K562 (cell line): ENCODE measurements at regions of chr1 and their contacts with region 1.

Region 1: GRCh38 chr1:1615256-1616044 is at the start of gene MIB2:
- DNase-seq: peak; percentile 99 to 100 (median 99)
- ATAC-seq: peak; percentile 92
- H3K4me3 ChIP-seq: peak within 1 kb of the TSS; percentile 87
- H3K27ac ChIP-seq: peak within 1 kb of the TSS; percentile 99
- H3K4me1 ChIP-seq: peaks cover 14 to 70% of the 10 kb centered on the region in 2 experiments; a peak in 4 of 5 replicates
- H3K27me3 ChIP-seq: no peaks in the 10 kb centered on the region; a peak in 1 of 5 replicates
- CTCF ChIP-seq: 0 out of 6 replicates have a peak, but pooled peaks of 1 of the 3 experiments have one; percentile 3
- EP300 ChIP-seq: 0 out of 2 replicates have a peak, but pooled peaks have one; percentile 22
- POLR2A ChIP-seq: peak; percentile 98
- RAD21 ChIP-seq: peak in 1 of 2 experiments; percentile 20; a peak in 1 of 4 replicates
- polyA plus RNA-seq, gene MIB2: 0.04 TPM in 1 of 2 experiments, not detected in the other

Region 2: DNA sequence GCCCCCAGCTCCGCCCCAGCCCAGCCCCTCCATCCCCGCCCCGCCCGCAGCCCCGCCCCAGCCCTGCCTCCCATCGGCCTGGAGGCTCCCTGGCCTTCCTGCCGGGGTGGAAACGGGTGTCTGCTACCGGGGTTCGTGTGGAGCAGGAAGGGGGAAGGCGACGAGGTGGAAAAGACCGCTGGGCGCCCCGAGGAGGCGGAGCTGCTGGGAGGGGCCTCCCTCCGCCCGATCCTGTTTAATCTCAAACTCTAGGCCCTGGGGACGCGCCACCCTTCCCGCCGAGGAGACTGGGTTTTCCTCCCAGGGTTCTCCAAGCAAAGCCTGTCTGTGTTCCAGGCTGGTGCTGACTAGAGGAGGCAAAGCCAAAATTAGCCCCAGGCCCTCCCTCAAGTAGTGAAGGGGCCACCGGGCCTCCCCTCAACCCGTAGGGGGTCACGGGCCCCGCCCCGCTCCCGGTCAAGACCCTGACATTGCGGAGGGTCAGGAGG is 458.0 kb before region 1 on chr1:
- CTCF ChIA-PET with region 1: no interaction called
- POLR2A ChIA-PET with region 1: no interaction called
- in situ Hi-C with region 1: no loop called
- intact Hi-C with region 1: no loop called
- DNase-seq: peak; percentile 94 to 98 (median 98)
- ATAC-seq: peak; percentile 94
- H3K4me3 ChIP-seq: peak overlapping the region; percentile 60
- H3K27ac ChIP-seq: peak overlapping the region; percentile 93
- H3K4me1 ChIP-seq: peaks cover 25 to 59% of the 10 kb centered on the region in 2 experiments
- H3K27me3 ChIP-seq: peaks cover 5 to 10% of the 10 kb centered on the region in 2 experiments; a peak in 3 of 5 replicates
- CTCF ChIP-seq: no peak
- EP300 ChIP-seq: 0 out of 2 replicates have a peak, but pooled peaks have one; percentile 25
- POLR2A ChIP-seq: peak; percentile 88
- RAD21 ChIP-seq: no peak

Region 3: GRCh38 chr1:1462318-1462966 is 153.0 kb before region 1 on chr1:
- CTCF ChIA-PET with region 1: no interaction called
- POLR2A ChIA-PET with region 1: no interaction called
- in situ Hi-C with region 1: no loop called
- intact Hi-C with region 1: no loop called
- DNase-seq: peak in 3 of 4 experiments; percentile 30 to 71 (median 65)
- ATAC-seq: peak; percentile 63
- H3K4me3 ChIP-seq: no peak overlapping the region
- H3K27ac ChIP-seq: no peak overlapping the region
- H3K4me1 ChIP-seq: peaks cover 0 to 34% of the 10 kb centered on the region in 2 experiments; a peak in 3 of 5 replicates
- H3K27me3 ChIP-seq: no peaks in the 10 kb centered on the region; a peak in 1 of 5 replicates
- CTCF ChIP-seq: no peak
- EP300 ChIP-seq: no peak
- POLR2A ChIP-seq: no peak
- RAD21 ChIP-seq: no peak

Region 4: GRCh38 chr1:1597275-1597930 is 18.0 kb before region 1 on chr1:
- CTCF ChIA-PET with region 1: no interaction called
- POLR2A ChIA-PET with region 1: interaction called, 61 read pairs
- in situ Hi-C with region 1: no loop called
- intact Hi-C with region 1: no loop called
- DNase-seq: peak; percentile 70 to 91 (median 90)
- ATAC-seq: peak; percentile 72
- H3K4me3 ChIP-seq: no peak overlapping the region
- H3K27ac ChIP-seq: peak overlapping the region; percentile 38; the same call in 2 of the 3 replicates
- H3K4me1 ChIP-seq: peaks cover 20 to 70% of the 10 kb centered on the region in 2 experiments; a peak in 4 of 5 replicates
- H3K27me3 ChIP-seq: no peaks in the 10 kb centered on the region
- CTCF ChIP-seq: peak; percentile 17 to 32 (median 21); a peak in 3 of 6 replicates
- EP300 ChIP-seq: no peak
- POLR2A ChIP-seq: no peak
- RAD21 ChIP-seq: no peak

Region 5: GRCh38 chr1:1900883-1901640 is 285.6 kb after region 1 on chr1:
- CTCF ChIA-PET with region 1: no interaction called
- POLR2A ChIA-PET with region 1: no interaction called
- in situ Hi-C with region 1: no loop called
- intact Hi-C with region 1: no loop called
- DNase-seq: no peak
- ATAC-seq: no peak
- H3K4me3 ChIP-seq: no peak overlapping the region
- H3K27ac ChIP-seq: no peak overlapping the region
- H3K4me1 ChIP-seq: peaks cover 5 to 27% of the 10 kb centered on the region in 2 experiments; a peak in 4 of 5 replicates
- H3K27me3 ChIP-seq: peaks cover 0 to 2% of the 10 kb centered on the region in 2 experiments; a peak in 3 of 5 replicates
- CTCF ChIP-seq: no peak
- EP300 ChIP-seq: no peak
- POLR2A ChIP-seq: no peak
- RAD21 ChIP-seq: no peak